ENCODE measurements at regions of chr10 and their contacts with region 1.

Region 1: DNA sequence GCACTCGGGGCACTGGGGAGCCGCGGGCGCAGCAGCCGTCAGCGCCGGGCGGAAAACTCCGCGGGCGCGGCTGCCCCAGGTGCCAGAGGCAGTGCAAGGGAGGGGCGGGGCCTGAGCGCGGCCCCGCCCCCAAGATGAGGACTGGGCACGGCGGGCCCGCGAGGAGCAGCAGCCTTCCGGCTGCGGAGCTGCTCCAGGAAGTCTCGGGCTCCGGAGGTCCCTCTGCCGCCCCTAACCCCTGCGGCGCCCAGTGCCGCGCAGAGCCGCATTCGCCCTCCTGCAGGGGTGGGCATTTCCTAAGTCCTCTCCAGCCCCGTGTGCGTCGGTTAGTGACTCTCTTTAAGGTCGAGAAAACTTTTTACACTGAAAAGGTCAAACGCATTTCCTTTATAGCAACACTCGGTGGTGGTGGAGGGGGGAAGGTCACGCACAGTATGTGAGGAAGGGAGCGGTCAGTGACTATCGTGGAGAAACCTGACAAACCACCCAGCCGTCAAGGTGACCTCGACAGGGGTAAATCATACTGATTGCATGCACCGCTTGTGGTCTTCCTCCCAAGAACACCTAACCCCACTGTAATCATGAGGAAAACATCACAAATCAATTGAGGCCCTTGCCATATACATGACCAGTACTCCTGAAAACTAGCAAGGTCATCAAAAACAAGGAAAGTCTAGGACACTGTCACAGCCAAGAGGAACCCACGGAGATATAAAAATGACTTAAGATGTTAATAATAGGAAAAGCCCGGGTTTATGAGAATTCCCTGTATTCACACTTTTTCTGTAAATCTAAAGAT is at the start of gene ANXA11:
- DNase-seq: peak; percentile 91 to 97 (median 94)
- ATAC-seq: peak; percentile 81
- H3K4me3 ChIP-seq: peak within 1 kb of the TSS; percentile 86
- H3K27ac ChIP-seq: peak within 1 kb of the TSS; percentile 91
- H3K4me1 ChIP-seq: peaks cover 46 to 66% of the 10 kb centered on the region in 2 experiments
- H3K27me3 ChIP-seq: no peaks in the 10 kb centered on the region
- CTCF ChIP-seq: no peak
- EP300 ChIP-seq: no peak
- POLR2A ChIP-seq: peak; percentile 96
- RAD21 ChIP-seq: no peak; a peak in 1 of 4 replicates
- polyA plus RNA-seq, gene ANXA11: 43.6 to 70.0 TPM

Region 2: GRCh38 chr10:78424719-78425118 is 1781.0 kb before region 1 on chr10:
- CTCF ChIA-PET with region 1: no interaction called
- POLR2A ChIA-PET with region 1: no interaction called
- in situ Hi-C with region 1: no loop called
- intact Hi-C with region 1: no loop called
- DNase-seq: peak in 3 of 4 experiments; percentile 18 to 32 (median 28)
- ATAC-seq: peak; percentile 88
- H3K4me3 ChIP-seq: no peak overlapping the region
- H3K27ac ChIP-seq: no peak overlapping the region
- H3K4me1 ChIP-seq: no peaks in the 10 kb centered on the region
- H3K27me3 ChIP-seq: peaks cover 15 to 28% of the 10 kb centered on the region in 2 experiments; a peak in 4 of 5 replicates
- CTCF ChIP-seq: peak; percentile 38 to 60 (median 43); a peak in 5 of 6 replicates
- EP300 ChIP-seq: no peak
- POLR2A ChIP-seq: no peak
- RAD21 ChIP-seq: peak; percentile 24 to 48; a peak in 2 of 4 replicates

Region 3: GRCh38 chr10:80078448-80079311 is 127.0 kb before region 1 on chr10 and contains the start of gene TMEM254:
- CTCF ChIA-PET with region 1: no interaction called
- POLR2A ChIA-PET with region 1: no interaction called
- in situ Hi-C with region 1: no loop called
- intact Hi-C with region 1: no loop called
- DNase-seq: peak; percentile 64 to 83 (median 72)
- ATAC-seq: peak; percentile 93
- H3K4me3 ChIP-seq: peak within 1 kb of the TSS; percentile 36
- H3K27ac ChIP-seq: no peak within 1 kb of the TSS
- H3K4me1 ChIP-seq: peaks cover 0 to 10% of the 10 kb centered on the region in 2 experiments; a peak in 2 of 5 replicates
- H3K27me3 ChIP-seq: peaks cover 6 to 30% of the 10 kb centered on the region in 2 experiments; a peak in 4 of 5 replicates
- CTCF ChIP-seq: no peak
- EP300 ChIP-seq: no peak
- POLR2A ChIP-seq: no peak
- RAD21 ChIP-seq: no peak
- polyA plus RNA-seq, gene TMEM254: 4.7 TPM

Region 4: DNA sequence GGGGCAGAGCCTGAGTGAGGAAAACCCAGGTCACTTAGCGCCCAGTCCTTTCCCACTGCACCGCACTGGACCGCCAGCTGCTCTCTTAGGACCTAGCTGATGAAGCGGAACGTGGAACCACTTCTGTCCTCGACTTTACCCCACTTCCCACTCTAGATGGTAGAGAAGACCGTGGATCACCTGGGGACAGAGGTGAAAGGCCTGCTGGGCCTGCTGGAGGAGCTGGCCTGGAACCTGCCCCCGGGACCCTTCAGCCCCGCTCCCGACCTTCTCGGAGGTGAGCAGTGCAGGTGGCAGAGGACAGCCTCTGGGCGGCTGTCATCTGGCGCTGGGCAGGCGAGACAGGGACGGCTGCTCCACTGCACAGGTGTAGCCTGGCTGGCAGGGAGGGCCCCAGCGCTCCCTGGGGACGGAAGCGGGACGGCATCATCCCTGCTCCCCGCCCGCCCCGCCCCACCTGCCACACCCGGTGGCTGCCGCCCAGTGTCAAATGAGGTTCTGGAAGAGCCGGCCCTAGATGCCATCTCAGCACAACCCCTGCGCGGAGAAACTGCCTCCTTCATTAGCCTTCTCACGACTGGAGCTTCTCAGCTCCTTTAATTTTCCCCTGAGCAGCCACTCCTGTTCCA is 61.5 kb before region 1 on chr10:
- CTCF ChIA-PET with region 1: no interaction called
- POLR2A ChIA-PET with region 1: interaction called, 3 read pairs
- in situ Hi-C with region 1: no loop called
- intact Hi-C with region 1: loop called (anchors 5 kb)
- DNase-seq: peak in 3 of 4 experiments; percentile 40 to 51 (median 51)
- ATAC-seq: peak; percentile 54
- H3K4me3 ChIP-seq: no peak overlapping the region
- H3K27ac ChIP-seq: no peak overlapping the region
- H3K4me1 ChIP-seq: peaks cover 0 to 9% of the 10 kb centered on the region in 2 experiments; a peak in 3 of 5 replicates
- H3K27me3 ChIP-seq: peaks cover 8 to 29% of the 10 kb centered on the region in 2 experiments
- CTCF ChIP-seq: no peak; a peak in 1 of 6 replicates
- EP300 ChIP-seq: no peak
- POLR2A ChIP-seq: no peak
- RAD21 ChIP-seq: no peak; a peak in 1 of 4 replicates

Region 5: DNA sequence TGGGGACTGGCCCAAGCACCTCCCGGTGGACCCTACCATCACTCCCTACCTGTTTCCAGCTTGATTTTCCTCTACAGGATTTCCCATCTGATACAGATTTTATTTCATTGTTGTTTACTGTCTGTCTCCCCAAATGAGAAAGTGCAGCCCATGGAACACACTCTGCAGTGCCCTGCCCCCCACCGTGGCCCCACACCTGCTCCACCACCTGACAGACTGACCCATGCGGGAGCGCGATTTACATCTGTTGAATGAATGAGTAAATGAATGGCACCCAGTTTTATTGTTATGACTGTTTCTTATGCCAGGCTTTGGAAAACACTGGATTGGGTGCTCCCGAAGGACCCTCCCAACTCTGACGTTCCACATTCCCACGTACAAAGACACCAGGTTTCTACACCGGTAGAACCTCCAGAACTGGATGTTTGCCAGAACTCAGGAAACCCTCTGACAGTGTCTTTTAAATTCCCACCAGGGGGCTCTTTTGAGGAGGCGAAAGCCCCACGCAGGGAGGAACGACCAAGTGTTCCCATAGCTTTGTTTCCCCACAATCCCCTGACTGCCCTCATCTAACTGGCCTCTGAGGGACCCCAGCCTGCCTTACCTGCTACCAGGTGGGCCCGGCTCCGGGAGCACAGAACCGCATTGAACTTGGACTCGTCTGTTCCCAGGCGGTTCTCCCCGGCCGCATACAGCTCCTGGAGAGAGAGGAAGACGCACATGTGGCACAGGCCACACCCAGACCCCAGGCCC is 44.2 kb before region 1 on chr10:
- CTCF ChIA-PET with region 1: no interaction called
- POLR2A ChIA-PET with region 1: interaction called, 4 read pairs
- in situ Hi-C with region 1: no loop called
- intact Hi-C with region 1: loop called (anchors 2 kb)
- DNase-seq: peak in 3 of 4 experiments; percentile 42 to 62 (median 52)
- ATAC-seq: peak; percentile 53
- H3K4me3 ChIP-seq: no peak overlapping the region
- H3K27ac ChIP-seq: no peak overlapping the region
- H3K4me1 ChIP-seq: peaks cover 20 to 31% of the 10 kb centered on the region in 2 experiments
- H3K27me3 ChIP-seq: no peaks in the 10 kb centered on the region
- CTCF ChIP-seq: peak; percentile 48 to 54 (median 49); a peak in 5 of 6 replicates
- EP300 ChIP-seq: no peak
- POLR2A ChIP-seq: no peak
- RAD21 ChIP-seq: peak in 1 of 2 experiments; percentile 49; a peak in 2 of 4 replicates

Region 6: GRCh38 chr10:80187465-80188409 is 17.9 kb before region 1 on chr10:
- CTCF ChIA-PET with region 1: no interaction called
- POLR2A ChIA-PET with region 1: interaction called, 15 read pairs
- in situ Hi-C with region 1: no loop called
- intact Hi-C with region 1: loop called (anchors 1 kb)
- DNase-seq: peak; percentile 57 to 81 (median 66)
- ATAC-seq: peak; percentile 88
- H3K4me3 ChIP-seq: peak overlapping the region; percentile 4; the same call in 1 of the 2 replicates
- H3K27ac ChIP-seq: peak overlapping the region; percentile 64; the same call in 2 of the 3 replicates
- H3K4me1 ChIP-seq: peaks cover 31 to 37% of the 10 kb centered on the region in 2 experiments
- H3K27me3 ChIP-seq: no peaks in the 10 kb centered on the region
- CTCF ChIP-seq: no peak
- EP300 ChIP-seq: no peak; the same call in none of the 2 replicates
- POLR2A ChIP-seq: no peak
- RAD21 ChIP-seq: peak in 1 of 2 experiments; percentile 23; a peak in 1 of 4 replicates

Region 7: DNA sequence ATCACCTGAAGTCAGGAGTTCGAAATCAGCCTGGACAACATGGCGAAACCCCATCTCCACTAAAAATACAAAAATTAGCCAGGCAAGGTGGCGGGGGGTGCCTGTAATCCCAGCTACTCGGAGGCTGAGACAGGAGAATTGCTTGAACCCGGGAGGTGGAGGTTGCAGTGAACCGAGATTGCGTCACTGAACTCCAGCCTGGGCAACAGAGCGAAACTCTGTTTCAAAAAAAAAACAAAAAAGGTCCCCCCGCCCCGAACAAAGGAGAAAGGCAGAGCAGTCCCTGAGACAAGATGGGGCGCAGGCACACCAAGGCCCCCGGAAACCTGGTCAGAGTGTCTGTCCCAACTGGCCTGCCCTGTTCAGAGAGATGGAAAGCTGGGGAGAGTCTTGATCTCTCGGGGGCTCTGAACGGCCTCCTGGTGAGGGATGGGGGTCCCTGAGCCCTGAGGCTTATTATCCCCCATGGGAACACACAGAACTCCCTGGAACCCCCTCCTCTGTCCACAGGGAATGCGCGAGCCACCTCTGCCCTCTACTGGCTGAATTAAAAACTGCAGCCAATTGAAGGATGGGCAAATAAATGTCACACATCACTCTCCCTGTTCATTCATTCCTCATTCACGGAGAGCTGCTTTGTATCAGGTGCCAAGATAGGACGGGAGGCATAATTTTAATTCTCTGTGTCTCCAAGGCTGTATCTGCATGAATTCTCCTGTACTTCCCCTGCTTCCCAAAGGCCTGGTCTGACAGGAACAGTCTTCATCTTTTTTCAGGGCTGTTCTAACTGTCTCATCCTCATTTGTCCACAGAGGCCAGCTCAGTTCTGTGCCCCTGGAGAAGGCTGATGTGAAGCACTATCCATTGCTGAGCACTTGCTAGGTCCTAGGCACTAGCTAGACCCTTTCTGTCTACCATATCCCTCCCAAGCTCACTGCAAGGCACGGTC is 54.9 kb after region 1 on chr10:
- CTCF ChIA-PET with region 1: no interaction called
- POLR2A ChIA-PET with region 1: no interaction called
- in situ Hi-C with region 1: no loop called
- intact Hi-C with region 1: no loop called
- DNase-seq: peak; percentile 58 to 69 (median 64)
- ATAC-seq: peak; percentile 75
- H3K4me3 ChIP-seq: no peak overlapping the region
- H3K27ac ChIP-seq: no peak overlapping the region
- H3K4me1 ChIP-seq: peaks cover 0 to under 1% of the 10 kb centered on the region in 2 experiments; a peak in 1 of 5 replicates
- H3K27me3 ChIP-seq: peaks cover 6 to 39% of the 10 kb centered on the region in 2 experiments
- CTCF ChIP-seq: peak; percentile 81 to 96 (median 85)
- EP300 ChIP-seq: no peak
- POLR2A ChIP-seq: no peak
- RAD21 ChIP-seq: peak; percentile 35 to 74; a peak in 3 of 4 replicates

Region 8: GRCh38 chr10:80280973-80281691 is 75.5 kb after region 1 on chr10:
- CTCF ChIA-PET with region 1: no interaction called
- POLR2A ChIA-PET with region 1: no interaction called
- in situ Hi-C with region 1: no loop called
- intact Hi-C with region 1: no loop called
- DNase-seq: no peak
- ATAC-seq: peak; percentile 45; the same call in 2 of the 3 replicates
- H3K4me3 ChIP-seq: no peak overlapping the region
- H3K27ac ChIP-seq: no peak overlapping the region
- H3K4me1 ChIP-seq: no peaks in the 10 kb centered on the region
- H3K27me3 ChIP-seq: peaks cover 33 to 79% of the 10 kb centered on the region in 2 experiments; a peak in 4 of 5 replicates
- CTCF ChIP-seq: no peak
- EP300 ChIP-seq: no peak
- POLR2A ChIP-seq: no peak
- RAD21 ChIP-seq: no peak